ENCODE measurements at regions of chr2 and their contacts with region 1.

Region 1: DNA sequence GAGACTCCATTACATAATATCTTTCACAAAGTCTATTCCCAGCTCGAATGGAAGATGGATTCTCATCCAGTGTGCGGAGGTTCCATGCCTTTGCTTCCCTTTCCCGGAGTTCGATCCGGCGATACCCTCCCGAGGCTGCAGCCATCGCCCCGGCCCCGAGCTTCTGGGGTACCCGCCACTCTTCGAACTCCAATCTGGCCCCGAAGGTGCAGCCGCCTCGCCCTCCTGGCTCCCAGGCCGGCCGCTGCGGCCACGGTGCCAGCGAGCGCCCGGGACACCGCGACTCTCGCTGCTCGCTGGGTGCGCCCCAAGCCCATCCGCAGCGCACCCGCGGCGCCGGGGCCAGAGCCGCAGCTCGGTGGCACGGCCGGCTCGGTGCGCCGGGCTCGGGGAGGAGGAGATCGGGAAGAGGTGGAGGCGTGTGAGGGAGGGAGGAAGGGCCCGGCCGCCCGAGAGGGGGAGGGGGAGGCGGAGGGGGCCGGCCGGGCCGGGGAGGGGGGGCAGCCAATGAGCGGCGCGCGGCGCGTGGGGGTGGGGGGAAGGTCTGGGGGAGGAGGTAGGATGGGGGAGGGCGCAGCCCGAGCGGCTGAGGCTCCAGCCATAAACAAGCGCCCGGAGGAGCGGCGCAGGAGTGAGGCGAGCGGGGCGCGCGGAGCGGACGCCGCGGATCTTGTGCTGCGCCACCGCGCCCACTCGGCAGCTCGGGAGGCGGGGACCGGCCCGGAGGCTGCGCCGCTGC is at the start of gene CRIM1:
- DNase-seq: peak; percentile 92 to 94 (median 94)
- ATAC-seq: peak; percentile 62 to 87 (median 78)
- H3K4me3 ChIP-seq: peak within 1 kb of the TSS; percentile 63 to 95 (median 85)
- H3K27ac ChIP-seq: peak within 1 kb of the TSS; percentile 80 to 97 (median 94)
- H3K4me1 ChIP-seq: peaks cover 0 to 52% (median 32%) of the 10 kb centered on the region in 12 donors
- H3K27me3 ChIP-seq: peaks cover 0 to 20% (median 0%) of the 10 kb centered on the region in 9 donors
- CTCF ChIP-seq: peak in 1 of 12 donors; percentile 19
- POLR2A ChIP-seq: peak in 1 of 2 donors; percentile 97
- total RNA-seq, gene CRIM1: 34.9 to 120 (median 89.3) TPM

Region 2: GRCh38 chr2:36389091-36389564 is 33.8 kb after region 1 on chr2:
- intact Hi-C with region 1: no loop called
- DNase-seq: no peak
- ATAC-seq: peak; percentile 31 to 71 (median 63)
- H3K4me3 ChIP-seq: peak overlapping the region in 1 of 12 donors; percentile 6
- H3K27ac ChIP-seq: peak overlapping the region in 9 of 12 donors; percentile 1 to 67 (median 35)
- H3K4me1 ChIP-seq: peaks cover 2 to 72% (median 43%) of the 10 kb centered on the region in 12 donors
- H3K27me3 ChIP-seq: no peaks in the 10 kb centered on the region
- CTCF ChIP-seq: no peak
- POLR2A ChIP-seq: no peak

Region 3: DNA sequence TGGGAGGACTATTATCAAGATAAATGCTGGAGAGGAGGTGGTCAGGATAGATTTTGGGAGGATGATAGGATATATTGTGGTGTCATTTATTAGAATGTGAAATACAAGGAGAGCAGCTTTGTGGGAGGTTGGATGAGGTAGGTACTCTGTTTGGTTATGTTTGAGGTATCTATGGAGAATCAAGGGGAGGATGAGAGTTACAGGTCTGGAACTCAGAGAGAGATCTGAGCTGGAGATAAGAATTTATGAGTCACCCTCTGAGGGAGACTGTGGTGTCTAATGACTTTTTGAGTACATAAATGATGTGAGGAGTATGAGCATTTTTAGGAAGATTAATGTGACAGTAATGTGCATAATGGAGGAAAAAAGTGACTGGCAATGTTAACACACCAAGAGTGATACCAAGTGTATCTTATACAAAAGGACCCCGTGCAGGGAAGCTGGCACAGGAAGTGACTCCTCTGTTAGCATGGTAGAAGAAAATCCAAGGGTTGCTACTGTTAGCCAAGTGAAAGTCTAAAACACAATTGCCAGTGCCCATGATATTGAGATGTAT is 48.4 kb after region 1 on chr2:
- intact Hi-C with region 1: loop called in 5 of 10 experiments (anchors 5 kb)
- DNase-seq: no peak
- ATAC-seq: peak in 1 of 4 donors; percentile 45
- H3K4me3 ChIP-seq: no peak overlapping the region
- H3K27ac ChIP-seq: peak overlapping the region in 2 of 12 donors; percentile 0 to 1
- H3K4me1 ChIP-seq: peaks cover 9 to 57% (median 31%) of the 10 kb centered on the region in 12 donors
- H3K27me3 ChIP-seq: no peaks in the 10 kb centered on the region
- CTCF ChIP-seq: no peak
- POLR2A ChIP-seq: no peak

Region 4: GRCh38 chr2:36433311-36434217 is 78.2 kb after region 1 on chr2:
- intact Hi-C with region 1: loop called in 1 of 10 experiments (anchors 2 kb)
- DNase-seq: peak in 4 of 5 donors; percentile 46 to 70 (median 60)
- ATAC-seq: peak; percentile 49 to 73 (median 58)
- H3K4me3 ChIP-seq: peak overlapping the region in 2 of 12 donors; percentile 3 to 12
- H3K27ac ChIP-seq: peak overlapping the region; percentile 7 to 77 (median 54)
- H3K4me1 ChIP-seq: peaks cover 8 to 74% (median 44%) of the 10 kb centered on the region in 12 donors
- H3K27me3 ChIP-seq: no peaks in the 10 kb centered on the region
- CTCF ChIP-seq: no peak
- POLR2A ChIP-seq: no peak

Region 5: DNA sequence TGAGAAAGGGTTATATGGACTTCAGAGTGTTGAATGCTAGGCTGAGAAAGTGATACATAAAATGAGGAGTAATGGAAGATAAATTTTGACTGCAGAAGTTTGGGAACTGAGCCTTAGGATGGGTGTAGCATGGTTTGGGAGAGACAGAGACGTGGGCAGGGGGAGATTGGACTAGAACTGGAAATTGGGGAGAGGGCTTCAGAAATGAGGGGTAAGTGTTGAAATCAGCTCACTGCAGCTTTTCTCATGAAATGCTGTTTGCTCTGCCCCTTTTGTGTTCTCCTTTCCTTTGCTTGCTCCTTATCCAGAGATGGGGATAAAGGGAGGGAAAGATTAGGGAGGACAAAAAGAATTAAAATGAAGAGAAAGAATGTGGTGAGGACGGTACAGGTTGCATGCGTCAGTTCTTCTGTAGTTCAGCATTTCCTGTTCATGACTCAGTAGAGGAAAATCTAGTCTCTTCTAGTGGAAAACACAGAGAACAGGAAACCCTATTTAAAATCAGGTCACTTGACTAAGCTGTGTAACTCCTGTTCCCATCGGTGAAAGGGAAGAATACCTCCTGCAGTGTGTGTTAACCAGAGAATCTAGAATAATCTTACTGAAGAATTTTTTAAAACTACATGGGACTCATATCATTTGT is 105.8 kb after region 1 on chr2:
- intact Hi-C with region 1: loop called in 9 of 10 experiments (anchors 2 to 5 kb)
- DNase-seq: no peak
- ATAC-seq: peak in 3 of 4 donors; percentile 37 to 57 (median 37)
- H3K4me3 ChIP-seq: no peak overlapping the region
- H3K27ac ChIP-seq: peak overlapping the region in 5 of 12 donors; percentile 8 to 50 (median 31)
- H3K4me1 ChIP-seq: peaks cover 3 to 67% (median 38%) of the 10 kb centered on the region in 12 donors
- H3K27me3 ChIP-seq: no peaks in the 10 kb centered on the region
- CTCF ChIP-seq: no peak
- POLR2A ChIP-seq: no peak

Region 6: DNA sequence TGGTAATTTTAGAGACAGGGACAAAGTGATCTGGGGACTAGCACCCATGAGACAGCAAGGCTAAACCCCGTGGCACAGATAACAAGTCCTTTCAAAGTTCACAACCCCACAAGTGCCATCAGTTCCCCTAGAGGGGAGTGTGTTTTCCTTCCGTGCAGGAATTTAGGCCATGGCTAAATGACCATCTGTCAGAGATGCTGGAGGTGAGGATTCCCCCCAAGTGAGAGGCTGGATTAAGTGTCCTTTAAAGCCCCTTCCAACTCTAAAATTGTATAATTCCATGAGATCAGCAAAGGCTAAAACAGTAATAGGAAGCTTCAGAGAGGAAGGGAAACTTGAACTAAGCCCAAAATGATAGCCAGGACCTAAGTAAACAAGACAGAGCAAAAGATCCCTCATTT is 233.9 kb after region 1 on chr2:
- intact Hi-C with region 1: loop called in 2 of 10 experiments (anchors 10 kb)
- DNase-seq: no peak
- ATAC-seq: peak; percentile 81 to 89 (median 84)
- H3K4me3 ChIP-seq: no peak overlapping the region
- H3K27ac ChIP-seq: peak overlapping the region in 10 of 12 donors; percentile 2 to 66 (median 22)
- H3K4me1 ChIP-seq: peaks cover 0 to 22% (median 12%) of the 10 kb centered on the region in 12 donors
- H3K27me3 ChIP-seq: no peaks in the 10 kb centered on the region
- CTCF ChIP-seq: no peak
- POLR2A ChIP-seq: no peak

Region 7: DNA sequence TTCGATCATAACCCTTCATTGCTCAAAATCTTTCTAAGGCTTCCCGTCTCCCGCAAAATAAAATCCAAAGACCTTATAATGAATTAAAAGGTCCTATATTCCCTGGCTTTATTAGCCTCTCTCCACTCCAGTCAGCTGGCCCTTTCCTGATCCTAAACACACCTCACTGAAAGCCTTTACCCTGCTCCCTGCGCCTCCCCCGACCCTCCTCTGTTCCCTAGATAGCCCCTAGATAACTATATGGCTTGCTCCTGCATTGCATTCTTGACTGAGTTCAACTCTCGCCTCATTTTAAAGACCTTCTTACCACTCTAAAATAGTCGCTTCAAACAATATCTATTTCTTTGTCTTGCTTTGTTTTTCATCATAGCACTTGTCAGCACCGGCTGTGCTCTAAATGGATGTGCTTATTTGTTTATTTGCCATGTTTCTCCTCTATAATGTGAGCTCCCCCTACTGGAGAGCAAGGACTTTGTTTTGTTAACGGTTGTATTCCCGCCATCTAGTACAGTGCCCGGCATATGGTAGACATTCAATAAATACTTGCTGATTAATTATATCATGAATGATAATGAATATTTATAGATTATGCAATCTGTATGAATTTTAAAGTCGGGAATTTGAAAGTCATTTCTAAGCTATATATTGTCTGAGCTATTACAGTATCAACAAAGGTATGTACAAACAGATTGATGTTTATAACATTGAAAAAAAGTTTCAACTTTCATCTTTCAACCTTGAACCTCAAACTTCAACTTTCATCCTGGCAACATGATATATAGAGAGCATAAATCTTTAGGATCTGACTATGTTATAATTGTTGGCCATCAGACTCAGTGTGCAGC is 308.8 kb after region 1 on chr2:
- intact Hi-C with region 1: loop called in 9 of 10 experiments (anchors 1 to 5 kb)
- DNase-seq: peak in 1 of 5 donors; percentile 20
- ATAC-seq: peak; percentile 73 to 90 (median 84)
- H3K4me3 ChIP-seq: no peak overlapping the region
- H3K27ac ChIP-seq: no peak overlapping the region
- H3K4me1 ChIP-seq: peaks cover 0 to 6% (median 0%) of the 10 kb centered on the region in 12 donors
- H3K27me3 ChIP-seq: peaks cover 0 to 6% (median 0%) of the 10 kb centered on the region in 9 donors
- CTCF ChIP-seq: peak; percentile 66 to 88 (median 79)
- POLR2A ChIP-seq: no peak

Measured in heart left ventricle (tissue), 16 donors.